GM10248 (cell line): ENCODE measurements at regions of chr3 and their contacts with region 1.

Region 1: DNA sequence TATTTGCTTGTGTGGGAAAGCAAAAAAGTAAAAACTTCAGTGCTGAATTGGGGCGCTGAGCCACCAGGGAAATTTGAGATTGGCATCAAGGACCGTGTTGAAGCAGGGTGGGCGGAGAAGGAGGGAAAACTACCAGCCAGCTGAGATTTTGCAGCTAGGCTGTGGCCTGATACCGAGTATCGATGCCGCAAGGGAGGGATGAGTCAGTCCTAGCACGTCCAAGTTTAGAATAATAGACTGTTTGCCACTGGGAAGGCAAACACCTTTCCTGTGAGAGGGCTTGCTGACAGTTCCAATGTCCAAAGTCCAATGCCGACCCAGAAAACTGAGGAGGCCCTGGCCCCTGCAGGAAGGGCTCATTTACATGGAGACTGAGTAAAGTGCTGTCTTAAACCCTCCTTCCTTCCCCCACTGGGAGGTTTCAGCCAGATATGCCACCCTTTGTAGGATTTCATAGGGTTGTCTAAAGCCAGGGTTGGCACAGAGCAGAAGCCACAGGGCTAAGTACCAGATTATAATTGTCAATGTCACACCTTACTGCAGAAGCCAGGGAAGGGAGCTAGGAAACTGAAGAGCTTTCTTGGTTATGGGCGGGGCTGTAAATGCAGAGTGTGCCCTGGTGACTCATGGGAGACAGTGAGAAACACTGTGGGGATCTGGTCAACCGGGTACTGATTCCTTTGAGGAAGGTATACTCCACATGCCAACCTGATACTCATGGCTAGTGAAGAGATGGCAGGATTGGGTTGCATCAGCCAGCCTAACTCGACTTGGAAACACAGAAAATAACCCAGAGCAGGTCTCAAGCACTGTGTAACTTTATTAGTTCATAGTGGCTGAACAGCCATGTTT is 28.4 kb upstream of the PIK3CB start:
- DNase-seq: no peak
- CTCF ChIP-seq: no peak

Region 2: GRCh38 chr3:138842483-138843188 is 20.5 kb before region 1 on chr3:
- CTCF ChIA-PET with region 1: no interaction called
- POLR2A ChIA-PET with region 1: interaction called, 10 read pairs
- DNase-seq: peak; percentile 69
- CTCF ChIP-seq: no peak

Region 3: DNA sequence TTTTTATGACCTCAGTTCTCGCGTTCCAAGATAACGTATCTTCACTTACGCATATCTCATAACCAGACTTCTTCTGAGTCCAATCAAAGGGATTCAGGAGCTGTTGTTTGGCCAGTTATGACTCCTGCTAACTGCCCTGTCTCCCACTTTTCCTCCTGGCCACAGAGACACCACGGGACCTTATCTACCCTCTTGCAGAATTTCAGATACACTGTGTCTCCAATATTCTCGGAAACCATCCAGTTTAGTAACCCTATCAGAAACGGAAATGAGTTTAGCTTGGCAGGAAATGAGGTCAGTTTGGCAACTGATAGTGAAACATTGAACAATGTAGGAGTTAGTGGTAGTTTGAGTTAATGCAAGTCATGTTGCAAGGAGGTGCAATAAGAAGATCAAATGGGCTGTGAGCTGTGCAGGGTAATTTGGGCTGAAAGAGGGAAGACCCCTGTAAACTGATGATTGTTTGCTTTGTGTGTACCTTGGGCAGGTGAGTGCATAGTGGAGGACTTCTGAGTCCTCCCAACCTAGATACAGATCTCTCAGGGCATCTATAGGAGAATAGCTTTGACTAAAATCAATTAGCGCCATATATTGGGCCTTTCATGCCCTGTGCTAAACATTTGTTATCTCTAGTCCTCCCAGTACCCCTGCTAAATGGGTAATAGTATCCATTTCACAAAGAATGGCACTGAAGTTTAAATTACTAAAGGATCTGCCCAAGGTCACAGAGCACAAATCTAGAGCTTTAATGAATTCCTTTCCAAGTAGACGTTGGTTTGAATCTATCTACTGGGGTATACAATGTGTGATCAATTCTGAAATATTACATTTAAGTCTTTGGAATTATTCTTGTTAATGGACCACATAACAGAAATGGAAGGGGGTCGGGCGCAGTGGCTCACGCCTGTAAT is 12.9 kb after region 1 on chr3:
- CTCF ChIA-PET with region 1: no interaction called
- POLR2A ChIA-PET with region 1: no interaction called
- DNase-seq: no peak
- CTCF ChIP-seq: no peak